ENCODE measurements at regions of chr3 and their contacts with region 1.

Region 1: DNA sequence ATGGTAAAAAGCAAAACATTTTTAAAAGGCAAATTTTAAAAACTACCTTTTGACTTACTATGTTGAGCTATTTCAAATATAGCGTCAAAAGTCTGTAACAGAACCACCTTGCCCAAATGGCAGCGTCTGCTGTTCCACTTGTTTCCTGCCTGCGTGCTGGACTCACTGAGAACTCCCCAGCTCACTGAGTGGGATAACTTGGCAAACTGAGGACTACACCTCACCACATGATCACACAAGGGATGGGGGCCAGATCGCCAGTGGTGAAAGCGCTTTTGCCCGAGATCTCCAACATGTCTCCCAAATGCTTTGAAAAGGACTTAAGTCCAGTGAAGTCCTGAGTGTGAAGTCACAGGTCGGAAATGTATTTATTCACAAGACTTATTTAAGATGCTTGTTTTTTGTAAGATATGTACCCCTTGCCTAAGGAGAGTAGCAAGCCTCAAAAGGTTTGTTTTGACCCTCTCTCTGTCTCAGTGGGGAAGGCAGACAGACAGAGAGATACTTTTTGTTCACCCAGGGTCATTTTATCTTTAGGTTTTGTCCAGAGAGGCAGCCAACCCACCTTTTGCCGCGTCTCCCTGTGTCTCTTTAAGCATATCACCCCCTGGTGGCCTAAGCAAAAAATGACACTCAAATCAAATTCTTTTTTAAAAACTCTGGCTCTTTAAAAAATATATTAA is 192.6 kb downstream of the PDZRN3 start:
- DNase-seq: no peak

Region 2: DNA sequence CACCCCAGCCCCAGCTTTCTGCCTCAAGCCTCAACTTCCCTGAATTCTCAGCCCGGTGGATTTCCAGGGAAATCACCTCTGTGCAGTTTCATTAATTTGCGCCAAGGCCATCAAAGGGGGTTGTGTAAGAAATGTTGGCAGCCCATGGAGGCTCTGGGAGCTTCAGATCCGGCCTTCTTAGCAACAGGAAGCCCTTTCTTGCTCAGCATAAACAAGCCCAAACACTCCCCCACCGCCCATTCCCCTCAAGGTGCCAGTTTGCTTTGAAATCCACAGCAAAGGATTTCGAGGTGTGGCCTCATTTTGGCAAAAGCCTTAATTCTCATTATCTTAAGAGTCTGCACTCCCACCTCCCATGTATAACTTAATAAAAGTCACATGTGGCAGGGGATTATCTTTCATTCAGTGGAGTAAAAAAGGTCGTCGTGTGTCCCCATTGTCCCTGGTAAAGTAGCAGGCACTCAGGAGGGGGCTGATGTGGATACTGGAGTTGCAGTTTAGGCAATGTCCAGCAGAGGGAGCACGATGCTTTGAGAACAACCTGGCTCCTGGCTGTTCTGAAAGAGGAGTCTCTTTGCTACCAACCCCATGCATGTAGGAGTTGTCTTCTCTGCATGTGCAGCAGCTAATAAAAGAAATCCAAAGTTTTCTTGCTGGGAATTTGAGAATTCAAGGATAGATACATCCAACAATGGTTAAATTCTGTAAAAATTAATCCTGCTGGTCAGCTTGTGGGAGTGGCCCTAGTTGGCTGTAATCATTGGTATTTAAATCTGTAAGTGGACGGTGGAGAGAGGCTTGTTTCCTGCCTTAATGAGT is 331.2 kb before region 1 on chr3:
- intact Hi-C with region 1: loop called (anchors 5 kb)
- DNase-seq: peak; percentile 86

Measured in cardiac septum (tissue), 1 donor.